Activated T-helper 2 cell treated with anti-CD3 and anti-CD28 coated beads, Interferon-gamma antibody, Interleukin-2, Interleukin-4, amounts not matched to agents 10 μg/mL and 5 μg/mL and 100 μg/mL, durations not matched to agents 14 hours and 24 hours and 36 hours (primary cell): ENCODE measurements at regions of chr19 and their contacts with region 1.

Region 1: GRCh38 chr19:38263689-38264485 is 486 bp upstream of the SPINT2 start:
- DNase-seq: peak; percentile 75
- H3K4me3 Mint-ChIP-seq: peak overlapping the region; percentile 95
- H3K27ac Mint-ChIP-seq: peak overlapping the region; percentile 98
- H3K4me1 Mint-ChIP-seq: peaks cover 50% of the 10 kb centered on the region
- H3K27me3 Mint-ChIP-seq: no peaks in the 10 kb centered on the region

Region 2: GRCh38 chr19:38213911-38214625 is 49.8 kb before region 1 on chr19:
- intact Hi-C with region 1: no loop called
- DNase-seq: peak; percentile 69
- H3K4me3 Mint-ChIP-seq: no peak overlapping the region
- H3K27ac Mint-ChIP-seq: peak overlapping the region; percentile 62
- H3K4me1 Mint-ChIP-seq: peaks cover 11% of the 10 kb centered on the region
- H3K27me3 Mint-ChIP-seq: peaks cover 30% of the 10 kb centered on the region

Region 3: DNA sequence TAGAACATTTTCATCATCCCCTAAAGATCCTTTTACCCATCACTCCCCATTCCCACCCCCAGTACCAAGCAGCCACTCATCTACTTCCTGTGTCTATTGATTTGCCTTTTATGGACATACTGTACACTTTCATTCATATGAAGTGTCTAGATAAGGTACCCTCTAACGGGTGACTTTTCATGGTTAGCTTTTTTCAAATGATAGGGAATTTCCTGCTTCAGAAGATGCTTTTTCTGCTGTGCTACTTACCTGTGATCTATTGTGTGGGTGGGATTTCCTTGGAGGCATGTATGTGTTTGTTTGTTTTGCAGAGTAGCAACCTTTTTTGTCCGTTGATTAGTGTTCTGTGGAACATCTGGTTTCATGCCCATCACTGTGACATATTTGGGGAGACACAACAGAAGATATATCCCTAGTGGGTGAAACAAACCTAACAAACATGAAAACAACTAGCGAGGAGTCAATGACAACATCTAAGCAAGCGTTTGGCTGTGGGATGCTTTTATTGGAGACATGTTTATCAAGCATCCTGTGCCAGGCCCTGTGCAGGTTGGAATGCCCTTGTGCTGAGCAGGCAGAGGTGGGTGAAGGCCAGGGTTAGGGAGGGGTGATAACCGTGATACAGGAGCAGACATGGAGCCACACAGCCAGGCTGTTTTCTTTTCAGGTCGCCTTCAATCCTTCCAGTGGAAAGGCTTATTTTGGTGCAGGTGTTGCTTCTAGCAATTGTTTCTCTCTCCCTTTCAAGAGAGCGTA is 18.1 kb after region 1 on chr19:
- intact Hi-C with region 1: loop called (anchors 2 kb)
- DNase-seq: no peak
- H3K4me3 Mint-ChIP-seq: peak overlapping the region; percentile 4
- H3K27ac Mint-ChIP-seq: peak overlapping the region; percentile 82
- H3K4me1 Mint-ChIP-seq: peaks cover 26% of the 10 kb centered on the region
- H3K27me3 Mint-ChIP-seq: no peaks in the 10 kb centered on the region